ENCODE measurements at regions of chr9 and their contacts with region 1.

Region 1: GRCh38 chr9:13688994-13689600 is 409.6 kb upstream of the MPDZ start:
- ATAC-seq: peak in 4 of 8 experiments; percentile 18 to 50 (median 46)
- H3K4me3 ChIP-seq: no peak overlapping the region
- H3K27ac ChIP-seq: no peak overlapping the region
- H3K4me1 ChIP-seq: peaks cover 0 to 3% of the 10 kb centered on the region in 2 donors

Region 2: GRCh38 chr9:13588151-13589033 is 100.7 kb before region 1 on chr9:
- in situ Hi-C with region 1: loop called in 1 of 9 experiments (anchors 25 kb)
- ATAC-seq: peak in 6 of 8 experiments; percentile 16 to 56 (median 40)
- H3K4me3 ChIP-seq: no peak overlapping the region
- H3K27ac ChIP-seq: peak overlapping the region in 1 of 2 donors; percentile 73
- H3K4me1 ChIP-seq: peaks cover 36 to 40% of the 10 kb centered on the region in 2 donors

Measured in motor neuron (in vitro differentiated cells).